Mammary epithelial cell (primary cell): ENCODE measurements at regions of chr20 and their contacts with region 1.

Region 1: DNA sequence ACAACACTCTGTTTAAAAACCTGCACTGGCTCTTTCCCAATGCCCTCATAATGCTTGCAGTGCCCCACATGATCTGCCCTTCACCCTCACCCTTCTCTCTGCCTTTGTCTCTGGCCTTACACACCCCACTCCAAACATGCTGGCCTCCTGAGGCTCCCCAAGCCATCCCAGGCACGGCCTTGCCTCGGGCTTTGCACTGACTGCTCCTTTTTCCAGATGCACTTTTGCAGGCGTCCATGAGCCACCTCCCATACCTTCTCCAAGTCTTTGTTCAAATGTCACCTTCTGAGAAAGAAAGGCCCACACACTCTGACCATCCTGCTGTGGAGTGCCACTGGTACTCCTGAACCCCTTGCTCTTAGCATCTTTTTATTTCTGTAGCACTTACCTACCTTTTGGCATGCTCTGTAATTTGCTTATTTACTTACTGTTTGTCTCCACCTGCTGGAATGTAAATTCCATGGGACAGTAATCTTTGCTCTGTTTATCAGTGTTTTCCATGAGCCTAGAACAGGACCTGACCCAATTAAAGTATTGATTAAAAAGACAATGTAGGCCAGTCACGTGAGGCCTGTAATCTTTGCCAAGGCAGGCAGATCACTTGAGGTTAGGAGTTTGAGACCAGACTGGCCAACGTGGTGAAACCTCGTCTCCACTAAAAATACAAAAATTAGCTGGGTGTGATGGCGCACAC is 30.7 kb downstream of the GFRA4 start:
- DNase-seq: no peak
- H3K4me3 ChIP-seq: no peak overlapping the region
- H3K27ac ChIP-seq: no peak overlapping the region
- H3K4me1 ChIP-seq: no peaks in the 10 kb centered on the region
- H3K27me3 ChIP-seq: no peaks in the 10 kb centered on the region
- CTCF ChIP-seq: no peak

Region 2: GRCh38 chr20:3572151-3572550 is 60.3 kb before region 1 on chr20:
- CTCF ChIA-PET with region 1: no interaction called
- dilution Hi-C with region 1: loop called (anchors 10 kb)
- in situ Hi-C with region 1: no loop called
- intact Hi-C with region 1: no loop called
- DNase-seq: no peak
- H3K4me3 ChIP-seq: no peak overlapping the region
- H3K27ac ChIP-seq: no peak overlapping the region
- H3K4me1 ChIP-seq: no peaks in the 10 kb centered on the region
- H3K27me3 ChIP-seq: no peaks in the 10 kb centered on the region
- CTCF ChIP-seq: no peak

Region 3: DNA sequence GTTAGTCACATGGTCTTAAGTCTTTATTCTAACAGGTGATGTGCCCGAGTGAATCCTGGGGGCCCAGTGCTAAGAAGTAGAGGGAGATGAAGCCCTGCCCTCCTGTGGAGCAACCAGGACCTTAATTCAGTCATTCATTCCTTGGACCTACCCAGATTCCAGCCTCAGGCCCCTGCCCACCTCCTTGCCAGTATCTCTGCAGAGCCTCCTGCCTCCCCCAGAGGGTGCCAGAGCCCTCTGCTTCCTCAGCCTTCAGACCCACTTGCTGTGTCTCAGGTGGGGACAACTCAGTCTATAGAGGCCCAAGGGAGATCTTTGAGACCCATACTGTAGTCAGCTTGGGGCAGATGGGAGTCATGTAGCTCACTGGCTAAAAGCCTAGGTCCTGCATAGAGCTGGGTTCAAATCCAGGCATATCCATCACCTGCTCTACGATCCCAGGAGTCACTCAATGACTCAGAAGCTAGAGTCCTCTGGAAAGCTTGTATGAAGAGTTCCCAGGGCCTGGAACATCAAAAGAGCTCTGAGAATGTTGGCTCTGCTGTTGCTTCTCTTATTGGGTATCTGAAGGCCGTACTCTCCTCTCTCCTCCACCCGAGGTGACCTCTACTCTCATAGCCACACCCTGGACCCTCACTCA is 83.9 kb after region 1 on chr20:
- CTCF ChIA-PET with region 1: no interaction called
- dilution Hi-C with region 1: loop called (anchors 5 kb)
- in situ Hi-C with region 1: no loop called
- intact Hi-C with region 1: no loop called
- DNase-seq: peak; percentile 16
- H3K4me3 ChIP-seq: no peak overlapping the region
- H3K27ac ChIP-seq: no peak overlapping the region
- H3K4me1 ChIP-seq: no peaks in the 10 kb centered on the region
- H3K27me3 ChIP-seq: no peaks in the 10 kb centered on the region
- CTCF ChIP-seq: peak; percentile 61 to 72